BJ (cell line): ENCODE measurements at regions of chr3 and their contacts with region 1.

Region 1: DNA sequence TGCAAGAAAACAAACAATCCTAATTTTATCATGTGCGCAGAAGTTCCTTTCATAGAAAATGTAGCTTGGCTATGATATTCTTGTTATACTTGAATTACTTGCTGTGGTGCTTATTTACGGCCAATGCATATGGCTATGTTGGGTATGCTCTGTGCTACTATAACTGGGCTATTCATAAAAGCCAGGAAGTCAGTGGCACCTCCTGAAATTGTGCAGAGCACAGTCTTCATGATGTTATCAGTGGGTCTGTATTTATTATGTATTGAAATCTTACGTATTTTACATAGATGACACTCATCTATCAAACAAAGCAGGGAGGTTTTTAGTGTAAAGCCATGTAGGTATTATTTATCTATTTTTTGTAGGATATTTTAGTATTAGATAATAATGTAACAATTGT is 196.5 kb upstream of the NAALADL2 start:
- DNase-seq: no peak
- H3K4me3 ChIP-seq: no peak overlapping the region
- H3K27me3 ChIP-seq: no peaks in the 10 kb centered on the region
- CTCF ChIP-seq: no peak

Region 2: GRCh38 chr3:174651951-174652350 is 10.7 kb before region 1 on chr3:
- CTCF ChIA-PET with region 1: no interaction called
- POLR2A ChIA-PET with region 1: interaction called, 13 read pairs
- DNase-seq: no peak
- H3K4me3 ChIP-seq: no peak overlapping the region
- H3K27me3 ChIP-seq: no peaks in the 10 kb centered on the region
- CTCF ChIP-seq: no peak